Sigmoid colon (tissue), 7 donors: ENCODE measurements at regions of chr16 and their contacts with region 1.

Region 1: GRCh38 chr16:589658-590159 is at the start of gene RAB40C:
- DNase-seq: peak; percentile 100
- H3K4me3 ChIP-seq: peak within 1 kb of the TSS; percentile 62 to 97 (median 90)
- H3K27ac ChIP-seq: peak within 1 kb of the TSS; percentile 95 to 99 (median 96)
- H3K4me1 ChIP-seq: peaks cover 0 to 45% (median 42%) of the 10 kb centered on the region in 4 donors
- H3K27me3 ChIP-seq: peaks cover 0 to 7% (median 3%) of the 10 kb centered on the region in 3 donors
- CTCF ChIP-seq: no peak
- EP300 ChIP-seq: no peak
- POLR2A ChIP-seq: no peak
- total RNA-seq, gene RAB40C: 16.8 to 32.7 (median 17.9) TPM

Region 2: GRCh38 chr16:234468-235305 is 355.0 kb before region 1 on chr16 and contains the start of gene FAM234A:
- intact Hi-C with region 1: no loop called
- DNase-seq: peak; percentile 97
- H3K4me3 ChIP-seq: peak within 1 kb of the TSS; percentile 67 to 83 (median 76)
- H3K27ac ChIP-seq: peak within 1 kb of the TSS; percentile 92 to 98 (median 96)
- H3K4me1 ChIP-seq: peaks cover 0 to 21% (median 19%) of the 10 kb centered on the region in 4 donors
- H3K27me3 ChIP-seq: no peaks in the 10 kb centered on the region
- CTCF ChIP-seq: peak in 2 of 4 experiments; percentile 33 to 41
- EP300 ChIP-seq: no peak
- POLR2A ChIP-seq: peak in 1 of 2 donors; percentile 51
- total RNA-seq, gene FAM234A: 38.3 to 82.5 (median 62.1) TPM

Region 3: DNA sequence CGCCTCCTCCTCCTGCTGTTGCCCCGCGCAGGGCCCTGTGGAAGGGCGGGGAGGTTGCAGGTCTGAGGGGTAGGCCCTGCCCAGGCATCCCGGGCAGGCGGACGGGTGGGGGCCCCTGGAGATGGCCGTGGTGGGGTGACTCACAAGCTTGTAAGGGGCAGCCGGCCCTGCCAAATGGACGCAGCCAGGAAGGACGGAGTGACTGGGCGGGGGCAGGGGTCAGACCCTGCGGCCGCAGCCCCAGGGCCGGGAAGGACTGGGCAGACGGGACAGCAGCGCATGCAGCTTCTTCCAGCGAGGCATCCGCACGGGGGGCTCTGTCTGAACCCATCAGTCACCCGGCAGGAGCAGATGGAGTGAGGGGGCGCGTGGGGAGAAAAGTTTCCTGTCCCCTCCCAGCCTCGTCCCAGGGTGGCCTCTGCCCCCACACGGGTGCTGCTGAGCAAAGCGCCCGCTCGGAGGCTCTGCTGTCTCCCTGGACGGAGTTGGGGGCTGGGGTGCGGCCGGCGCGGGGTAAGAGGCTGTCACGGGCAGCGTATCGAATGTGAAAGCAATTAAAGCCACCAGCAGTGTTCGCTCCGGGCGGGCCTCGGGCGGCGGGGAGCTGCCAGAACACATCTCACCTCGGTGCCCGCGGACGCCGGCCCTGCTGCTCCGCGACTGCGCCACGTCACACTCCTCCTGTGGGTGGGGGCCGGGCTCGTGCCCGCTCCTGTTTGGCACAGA is 34.9 kb before region 1 on chr16:
- intact Hi-C with region 1: no loop called
- DNase-seq: no peak
- H3K4me3 ChIP-seq: no peak overlapping the region
- H3K27ac ChIP-seq: no peak overlapping the region
- H3K4me1 ChIP-seq: peaks cover 0 to 5% (median 3%) of the 10 kb centered on the region in 4 donors
- H3K27me3 ChIP-seq: peaks cover 7 to 21% (median 20%) of the 10 kb centered on the region in 3 donors
- CTCF ChIP-seq: no peak
- EP300 ChIP-seq: no peak
- POLR2A ChIP-seq: no peak

Region 4: DNA sequence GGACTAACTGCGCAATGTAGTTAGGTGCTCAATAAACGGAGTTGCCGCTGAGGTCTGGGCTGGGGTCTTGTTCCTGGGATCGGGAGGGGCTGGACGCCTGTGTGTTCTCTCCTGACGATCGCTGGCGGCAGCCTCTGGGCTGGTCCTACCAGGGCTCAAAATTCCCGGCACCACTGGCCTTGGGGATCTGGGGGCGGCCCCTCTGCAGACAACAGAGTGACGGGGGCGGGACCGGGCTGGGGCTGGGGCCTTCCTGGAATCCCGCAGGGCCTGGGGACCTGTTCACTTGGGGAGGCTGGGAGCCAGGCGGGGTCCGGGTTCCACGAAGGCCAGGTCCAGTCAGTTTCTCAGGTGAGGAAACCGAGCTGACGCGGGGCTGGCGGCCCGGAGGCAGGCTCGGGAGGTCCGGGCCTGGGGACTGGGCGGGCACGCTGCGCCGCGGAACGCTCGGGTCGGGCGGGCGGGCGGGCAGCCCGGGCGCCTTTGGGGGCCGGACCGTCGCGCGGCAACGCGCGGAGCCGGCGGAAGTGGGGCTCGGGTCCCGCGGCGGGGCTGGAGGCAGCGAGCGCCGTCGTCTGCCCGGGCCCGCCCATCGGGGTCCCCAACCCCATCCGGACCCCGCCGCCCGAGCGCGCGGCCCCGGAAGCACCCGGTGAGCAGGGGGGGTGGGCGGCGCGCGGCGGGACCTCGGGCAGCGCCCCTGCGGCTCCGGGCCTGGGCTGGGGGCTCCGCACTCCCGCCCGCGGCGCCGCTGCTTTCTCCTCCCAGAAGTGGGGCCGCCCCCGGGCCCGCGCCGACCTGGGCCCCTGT is 20.1 kb before region 1 on chr16 and contains the start of gene PIGQ:
- intact Hi-C with region 1: loop called (anchors 1 kb)
- DNase-seq: peak; percentile 84
- H3K4me3 ChIP-seq: peak within 1 kb of the TSS; percentile 77 to 98 (median 98)
- H3K27ac ChIP-seq: peak within 1 kb of the TSS; percentile 80 to 87 (median 82)
- H3K4me1 ChIP-seq: peaks cover 0 to 53% (median 45%) of the 10 kb centered on the region in 4 donors
- H3K27me3 ChIP-seq: peaks cover 0 to 2% (median 0%) of the 10 kb centered on the region in 3 donors
- CTCF ChIP-seq: no peak
- EP300 ChIP-seq: no peak
- POLR2A ChIP-seq: no peak
- total RNA-seq, gene PIGQ: 15.5 to 45.7 (median 22.6) TPM

Region 5: DNA sequence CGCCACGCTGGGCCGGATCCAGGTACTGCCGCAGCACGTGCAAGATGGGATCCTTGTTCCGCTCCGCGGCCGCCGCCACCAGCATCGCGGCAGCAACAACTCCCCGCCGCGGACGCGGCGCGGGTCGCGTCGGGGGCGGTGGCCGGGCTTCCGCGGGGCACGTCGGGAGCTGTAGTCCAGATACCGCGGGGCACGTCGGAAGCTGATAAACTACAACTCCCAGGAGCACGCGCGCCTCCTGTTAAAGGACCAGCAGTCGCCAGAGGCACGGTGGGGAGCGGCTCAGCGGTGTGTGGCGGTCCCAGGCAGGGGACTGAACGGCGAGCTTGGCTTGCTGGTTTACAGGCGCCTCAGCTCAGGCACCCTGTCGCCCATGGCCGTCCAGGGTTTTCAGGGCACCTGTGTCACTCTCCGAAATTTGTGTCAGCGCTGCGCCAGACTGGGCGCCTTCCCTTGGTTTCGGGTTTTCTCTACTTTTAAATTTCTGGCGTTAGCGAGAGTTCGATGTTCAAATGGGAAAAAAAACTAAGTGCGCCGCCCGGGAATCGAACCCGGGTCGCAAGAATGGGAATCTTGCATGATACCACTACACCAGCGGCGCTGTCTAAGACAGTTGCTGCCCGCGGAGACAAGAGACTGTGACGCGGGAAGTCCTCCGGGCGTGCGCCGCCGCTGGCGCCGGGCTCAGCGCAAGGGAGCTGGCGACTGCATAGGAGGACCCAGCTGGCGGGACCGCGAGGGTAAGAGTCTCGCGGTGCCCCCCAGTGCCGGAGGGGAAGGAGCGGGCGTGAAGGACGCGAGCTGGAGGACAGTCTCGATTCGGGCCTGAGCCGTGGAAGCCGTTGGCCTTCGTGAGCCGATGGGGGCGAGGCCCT is 46.7 kb after region 1 on chr16 and contains the start of gene METTL26:
- intact Hi-C with region 1: loop called (anchors 2 kb)
- DNase-seq: peak; percentile 98
- H3K4me3 ChIP-seq: peak within 1 kb of the TSS; percentile 64 to 98 (median 81)
- H3K27ac ChIP-seq: peak within 1 kb of the TSS; percentile 89 to 99 (median 97)
- H3K4me1 ChIP-seq: peaks cover 0 to 37% (median 31%) of the 10 kb centered on the region in 4 donors
- H3K27me3 ChIP-seq: peaks cover 0 to 6% (median 0%) of the 10 kb centered on the region in 3 donors
- CTCF ChIP-seq: no peak
- EP300 ChIP-seq: no peak
- POLR2A ChIP-seq: peak; percentile 19 to 35
- total RNA-seq, gene METTL26: 101 to 163 (median 157) TPM

Region 6: GRCh38 chr16:660459-661183 is 70.9 kb after region 1 on chr16:
- intact Hi-C with region 1: loop called (anchors 2 kb)
- DNase-seq: peak; percentile 96
- H3K4me3 ChIP-seq: peak overlapping the region in 3 of 4 donors; percentile 24 to 39 (median 38)
- H3K27ac ChIP-seq: peak overlapping the region; percentile 75 to 87 (median 84)
- H3K4me1 ChIP-seq: peaks cover 0 to 19% (median 14%) of the 10 kb centered on the region in 4 donors
- H3K27me3 ChIP-seq: no peaks in the 10 kb centered on the region
- CTCF ChIP-seq: peak; percentile 47 to 74 (median 63)
- EP300 ChIP-seq: no peak
- POLR2A ChIP-seq: no peak

Region 7: DNA sequence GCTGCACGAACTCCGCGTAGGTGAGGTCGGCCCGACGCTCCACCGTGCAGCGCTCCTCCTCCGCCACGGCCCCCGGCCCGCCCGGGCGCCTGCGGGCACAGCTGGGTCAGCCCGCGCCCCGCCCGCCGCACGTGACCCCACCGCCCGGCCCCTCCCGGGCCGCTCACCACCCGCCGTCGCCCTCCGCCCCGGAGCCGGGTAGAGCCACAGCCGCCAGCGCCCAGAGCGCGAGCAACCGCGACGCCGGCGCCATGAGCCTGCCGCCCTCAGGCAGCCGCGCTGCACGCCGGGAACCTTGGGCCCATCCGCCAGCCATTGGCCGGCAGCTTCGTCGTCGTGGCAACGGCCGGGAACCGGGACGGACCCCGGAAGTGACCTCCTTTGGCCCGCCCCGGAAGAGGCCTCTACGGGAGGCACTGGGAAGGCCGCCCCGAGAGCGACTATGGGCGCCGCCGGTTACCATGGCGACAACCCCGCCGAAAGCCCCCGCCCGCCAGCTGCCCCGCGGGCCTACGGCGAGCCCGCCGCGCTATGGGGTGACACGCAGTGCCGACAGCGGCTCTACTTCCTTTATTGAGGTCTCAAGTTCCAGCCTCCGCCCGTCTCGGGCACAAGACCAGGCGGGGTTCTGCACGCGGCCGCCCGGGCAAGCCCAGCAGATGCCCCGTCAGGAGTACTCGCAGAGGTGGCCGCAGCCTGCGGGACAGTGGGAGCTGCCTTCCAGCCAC is 94.5 kb after region 1 on chr16 and contains the start of gene JMJD8:
- intact Hi-C with region 1: loop called (anchors 1 kb)
- DNase-seq: peak; percentile 98
- H3K4me3 ChIP-seq: peak within 1 kb of the TSS; percentile 49 to 83 (median 79)
- H3K27ac ChIP-seq: peak within 1 kb of the TSS; percentile 82 to 87 (median 83)
- H3K4me1 ChIP-seq: peaks cover 0 to 72% (median 67%) of the 10 kb centered on the region in 4 donors
- H3K27me3 ChIP-seq: no peaks in the 10 kb centered on the region
- CTCF ChIP-seq: no peak
- EP300 ChIP-seq: no peak
- POLR2A ChIP-seq: no peak
- total RNA-seq, gene JMJD8: 52.8 to 93.4 (median 73.8) TPM